ENCODE measurements at regions of chr4 and their contacts with region 1.

Region 1: DNA sequence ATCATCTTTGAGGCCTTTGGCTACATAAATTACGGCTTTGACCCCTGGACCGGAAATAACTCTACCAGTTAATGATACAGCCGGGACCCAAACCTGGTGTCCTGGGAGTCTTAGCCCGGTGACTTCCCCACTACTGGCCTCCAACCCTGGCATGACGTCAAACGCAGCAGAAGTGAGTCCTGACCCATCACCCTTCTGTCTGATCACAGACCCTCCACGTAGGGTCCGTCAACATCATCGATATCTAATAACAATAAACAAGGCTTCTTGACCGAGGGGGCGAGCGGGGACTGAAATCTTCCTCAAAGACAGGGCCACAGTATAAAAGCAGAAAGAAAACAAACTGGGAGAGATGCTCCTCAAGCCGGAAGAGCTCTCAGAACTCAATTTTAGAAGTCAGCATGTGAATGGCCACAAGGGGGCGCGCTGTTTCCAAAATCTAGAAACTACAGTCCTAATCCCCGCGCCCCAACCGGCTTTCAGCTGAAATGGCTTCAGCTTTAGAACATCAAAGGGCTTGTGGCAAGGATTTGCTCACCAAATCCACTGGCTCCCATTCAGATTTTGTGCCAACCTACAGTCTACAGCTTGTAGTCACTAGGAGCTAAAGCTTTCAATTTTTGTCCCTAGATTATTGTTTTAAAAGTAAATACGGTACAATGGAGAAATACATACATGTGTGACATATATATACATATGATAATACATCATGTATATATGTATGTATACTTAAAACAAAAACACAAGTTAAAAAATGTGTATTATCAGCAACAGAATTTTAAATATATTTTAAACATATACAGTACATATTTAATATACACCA is 46.4 kb upstream of the ENPP6 start:
- DNase-seq: peak; percentile 78 to 96 (median 91)
- ATAC-seq: peak; percentile 56 to 84 (median 62)
- H3K4me3 ChIP-seq: no peak overlapping the region
- H3K4me3 Mint-ChIP-seq: no peak overlapping the region
- H3K27ac ChIP-seq: no peak overlapping the region
- H3K27ac Mint-ChIP-seq: peak overlapping the region; percentile 9 to 72
- H3K4me1 ChIP-seq: peaks cover 9 to 25% of the 10 kb centered on the region in 2 experiments
- H3K4me1 Mint-ChIP-seq: peaks cover 30 to 39% (median 34%) of the 10 kb centered on the region in 3 donors
- H3K27me3 ChIP-seq: no peaks in the 10 kb centered on the region
- H3K27me3 Mint-ChIP-seq: peaks cover 0 to 2% of the 10 kb centered on the region in 2 donors

Region 2: GRCh38 chr4:184250795-184251669 is 13.1 kb before region 1 on chr4:
- CTCF ChIA-PET with region 1: interaction called, 8 to 14 read pairs
- POLR2A ChIA-PET with region 1: interaction called in 1 of 2 experiments, 4 read pairs
- DNase-seq: peak in 2 of 35 experiments; percentile 16 to 75
- ATAC-seq: peak in 3 of 4 experiments; percentile 47 to 75 (median 75)
- H3K4me3 ChIP-seq: no peak overlapping the region
- H3K4me3 Mint-ChIP-seq: no peak overlapping the region
- H3K27ac ChIP-seq: no peak overlapping the region
- H3K27ac Mint-ChIP-seq: no peak overlapping the region
- H3K4me1 ChIP-seq: peaks cover 0 to 3% of the 10 kb centered on the region in 2 experiments
- H3K4me1 Mint-ChIP-seq: peaks cover 0 to 6% (median 3%) of the 10 kb centered on the region in 3 donors
- H3K27me3 ChIP-seq: peaks cover 0 to 4% of the 10 kb centered on the region in 2 experiments
- H3K27me3 Mint-ChIP-seq: peaks cover 0 to 6% of the 10 kb centered on the region in 2 donors

Region 3: DNA sequence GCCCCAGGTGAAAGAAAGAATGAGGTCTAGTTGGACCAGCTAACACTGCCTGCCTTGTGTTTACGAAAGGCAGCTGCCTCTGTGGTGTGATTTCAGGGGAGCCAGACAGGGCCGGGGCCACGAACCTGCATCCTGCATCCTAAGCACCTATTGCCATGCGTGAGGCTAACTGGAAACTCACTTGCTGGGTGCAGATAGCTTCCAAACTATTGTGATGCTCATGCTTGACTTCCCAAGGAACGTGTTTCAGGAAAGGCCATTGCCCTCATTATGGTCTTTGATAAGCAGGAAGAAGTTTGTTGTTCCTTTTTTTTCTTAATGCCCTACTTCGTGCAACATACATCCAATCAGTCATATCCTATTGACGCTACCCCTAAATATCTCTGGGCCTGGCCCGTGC is 212.6 kb after region 1 on chr4:
- CTCF ChIA-PET with region 1: interaction called in 1 of 2 experiments, 11 read pairs
- POLR2A ChIA-PET with region 1: interaction called, 3 to 4 read pairs
- DNase-seq: peak in 25 of 35 experiments; percentile 4 to 43 (median 21)
- ATAC-seq: no peak
- H3K4me3 ChIP-seq: peak overlapping the region; percentile 13 to 23
- H3K4me3 Mint-ChIP-seq: peak overlapping the region; percentile 99 to 100 (median 100)
- H3K27ac ChIP-seq: peak overlapping the region; percentile 97
- H3K27ac Mint-ChIP-seq: peak overlapping the region; percentile 88 to 99
- H3K4me1 ChIP-seq: peaks cover 28 to 33% of the 10 kb centered on the region in 2 experiments
- H3K4me1 Mint-ChIP-seq: peaks cover 54 to 67% (median 58%) of the 10 kb centered on the region in 3 donors
- H3K27me3 ChIP-seq: no peaks in the 10 kb centered on the region
- H3K27me3 Mint-ChIP-seq: no peaks in the 10 kb centered on the region

Region 4: DNA sequence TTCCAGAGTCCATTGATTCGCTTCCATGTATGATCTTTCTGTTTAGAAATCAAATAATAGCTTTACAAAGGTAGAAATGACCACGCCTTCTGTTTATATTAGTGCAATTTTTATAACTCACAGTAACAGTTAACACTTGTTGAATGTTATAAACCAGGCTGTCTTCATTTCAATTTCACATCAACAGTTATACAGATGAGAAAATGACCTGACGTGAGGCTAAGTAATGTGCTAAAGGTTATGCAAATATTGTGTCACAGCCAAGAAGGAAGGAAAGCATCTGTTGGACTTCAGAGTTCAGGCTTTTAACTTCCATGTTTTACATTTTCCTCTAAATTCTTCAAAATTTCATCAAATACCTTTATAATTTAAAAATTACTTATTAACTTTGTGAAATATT is 371.3 kb after region 1 on chr4:
- CTCF ChIA-PET with region 1: interaction called in 1 of 2 experiments, 17 read pairs
- POLR2A ChIA-PET with region 1: no interaction called
- DNase-seq: no peak
- ATAC-seq: no peak
- H3K4me3 ChIP-seq: no peak overlapping the region
- H3K4me3 Mint-ChIP-seq: no peak overlapping the region
- H3K27ac ChIP-seq: no peak overlapping the region
- H3K27ac Mint-ChIP-seq: no peak overlapping the region
- H3K4me1 ChIP-seq: no peaks in the 10 kb centered on the region
- H3K4me1 Mint-ChIP-seq: peaks cover 18 to 24% (median 20%) of the 10 kb centered on the region in 3 donors
- H3K27me3 ChIP-seq: no peaks in the 10 kb centered on the region
- H3K27me3 Mint-ChIP-seq: no peaks in the 10 kb centered on the region

Region 5: DNA sequence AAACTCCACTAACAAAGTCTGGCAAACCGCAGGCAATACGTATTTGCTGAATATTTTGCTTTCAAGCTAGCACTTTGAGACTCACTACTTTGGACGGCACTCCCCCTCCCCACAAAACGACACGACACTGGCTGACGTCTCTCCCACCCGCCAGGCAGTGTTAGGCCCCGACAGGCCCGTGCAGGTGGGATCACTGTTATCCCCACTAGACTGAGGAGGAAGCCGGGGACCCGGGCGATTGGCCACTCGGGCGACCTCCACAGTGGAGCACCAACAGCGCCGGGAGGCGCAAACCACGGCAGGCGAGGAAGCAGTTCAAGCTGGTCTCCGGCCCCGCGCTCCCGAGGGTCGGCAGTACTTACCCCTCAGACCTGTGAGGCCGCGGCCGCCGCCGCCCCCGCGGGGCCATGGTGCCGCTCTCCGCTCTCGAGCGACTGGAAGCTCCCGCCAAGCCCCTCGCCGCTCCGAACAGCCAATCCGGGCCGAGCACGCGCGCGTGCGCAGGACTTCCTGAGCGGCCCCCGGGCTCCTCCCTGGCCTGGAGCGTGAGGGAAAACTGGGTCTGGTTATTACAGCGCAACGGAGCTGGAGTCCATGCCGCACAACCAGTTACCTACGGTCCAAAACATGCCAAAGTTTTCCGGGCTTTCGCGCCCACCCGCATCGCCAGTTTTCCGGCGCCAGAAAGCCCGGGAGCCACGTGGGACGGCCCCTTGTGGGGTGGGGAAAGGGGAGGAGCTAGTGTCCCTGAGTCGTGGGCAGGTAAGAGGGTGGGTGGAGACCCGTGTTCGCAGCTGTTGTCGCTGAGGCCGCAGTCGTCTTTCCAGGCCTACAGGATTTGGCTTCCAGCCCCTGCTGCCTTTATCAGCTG is 469.8 kb after region 1 on chr4 and contains the start of gene CENPU:
- CTCF ChIA-PET with region 1: interaction called, 3 to 11 read pairs
- POLR2A ChIA-PET with region 1: no interaction called
- DNase-seq: peak; percentile 85 to 96 (median 91)
- ATAC-seq: peak; percentile 94 to 97 (median 96)
- H3K4me3 ChIP-seq: peak within 1 kb of the TSS; percentile 66 to 79
- H3K4me3 Mint-ChIP-seq: peak within 1 kb of the TSS; percentile 83 to 89 (median 88)
- H3K27ac ChIP-seq: peak within 1 kb of the TSS; percentile 56
- H3K27ac Mint-ChIP-seq: peak within 1 kb of the TSS; percentile 88
- H3K4me1 ChIP-seq: peaks cover 0 to 10% of the 10 kb centered on the region in 2 experiments
- H3K4me1 Mint-ChIP-seq: peaks cover 11 to 18% (median 15%) of the 10 kb centered on the region in 3 donors
- H3K27me3 ChIP-seq: no peaks in the 10 kb centered on the region
- H3K27me3 Mint-ChIP-seq: no peaks in the 10 kb centered on the region
- total RNA-seq, gene CENPU: 1.5 to 7.8 (median 3.0) TPM

Measured in T-cell (primary cell).